ENCODE measurements at regions of chr20 and their contacts with region 1.

Region 1: DNA sequence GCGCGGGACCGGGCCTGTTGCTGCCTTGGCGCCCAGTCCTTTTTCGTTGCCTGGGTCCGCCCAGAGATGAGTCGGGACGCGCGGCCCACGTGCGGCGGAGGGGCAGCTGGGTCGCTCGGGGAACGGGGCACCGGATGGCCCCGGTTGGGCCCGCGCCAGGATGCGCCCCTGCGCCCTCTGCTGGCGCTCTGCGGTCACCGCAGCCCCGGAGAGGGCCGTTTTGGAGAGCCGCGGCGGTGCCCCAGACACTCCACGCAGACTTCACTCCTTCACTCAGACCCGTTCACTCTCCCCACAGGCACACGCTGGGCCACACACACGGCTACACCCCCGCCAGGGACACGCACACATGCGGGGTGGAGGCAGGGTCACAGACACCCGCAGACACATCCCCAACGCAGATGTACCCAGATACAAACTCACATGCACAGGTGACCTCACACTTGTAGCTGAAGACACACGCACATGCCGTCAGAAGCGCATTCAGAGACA is 38.8 kb downstream of the SRC start:
- DNase-seq: peak; percentile 89
- CTCF ChIP-seq: peak; percentile 94

Region 2: DNA sequence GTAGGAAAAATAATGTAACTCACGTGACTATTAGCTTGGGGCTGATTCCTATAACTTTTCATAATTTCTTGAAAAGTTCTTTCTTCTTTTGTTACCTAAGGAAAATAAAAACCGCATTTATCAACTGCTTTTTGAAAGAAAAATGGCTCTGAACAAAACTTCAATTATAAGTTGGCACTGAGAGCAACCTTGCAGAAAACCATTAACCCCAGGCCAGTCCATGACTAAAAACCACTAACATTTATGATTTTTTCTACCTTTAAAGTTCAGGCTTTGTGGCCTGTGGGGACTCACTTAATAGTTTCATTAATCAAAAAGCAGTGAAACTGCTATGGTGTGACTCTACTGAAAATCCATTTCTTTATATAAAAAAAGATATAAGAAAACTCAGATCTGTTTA is 364.1 kb before region 1 on chr20:
- CTCF ChIA-PET with region 1: no interaction called
- POLR2A ChIA-PET with region 1: no interaction called
- DNase-seq: no peak
- CTCF ChIP-seq: no peak

Region 3: GRCh38 chr20:37131486-37131885 is 253.2 kb before region 1 on chr20:
- CTCF ChIA-PET with region 1: no interaction called
- POLR2A ChIA-PET with region 1: no interaction called
- DNase-seq: no peak
- CTCF ChIP-seq: no peak

Region 4: DNA sequence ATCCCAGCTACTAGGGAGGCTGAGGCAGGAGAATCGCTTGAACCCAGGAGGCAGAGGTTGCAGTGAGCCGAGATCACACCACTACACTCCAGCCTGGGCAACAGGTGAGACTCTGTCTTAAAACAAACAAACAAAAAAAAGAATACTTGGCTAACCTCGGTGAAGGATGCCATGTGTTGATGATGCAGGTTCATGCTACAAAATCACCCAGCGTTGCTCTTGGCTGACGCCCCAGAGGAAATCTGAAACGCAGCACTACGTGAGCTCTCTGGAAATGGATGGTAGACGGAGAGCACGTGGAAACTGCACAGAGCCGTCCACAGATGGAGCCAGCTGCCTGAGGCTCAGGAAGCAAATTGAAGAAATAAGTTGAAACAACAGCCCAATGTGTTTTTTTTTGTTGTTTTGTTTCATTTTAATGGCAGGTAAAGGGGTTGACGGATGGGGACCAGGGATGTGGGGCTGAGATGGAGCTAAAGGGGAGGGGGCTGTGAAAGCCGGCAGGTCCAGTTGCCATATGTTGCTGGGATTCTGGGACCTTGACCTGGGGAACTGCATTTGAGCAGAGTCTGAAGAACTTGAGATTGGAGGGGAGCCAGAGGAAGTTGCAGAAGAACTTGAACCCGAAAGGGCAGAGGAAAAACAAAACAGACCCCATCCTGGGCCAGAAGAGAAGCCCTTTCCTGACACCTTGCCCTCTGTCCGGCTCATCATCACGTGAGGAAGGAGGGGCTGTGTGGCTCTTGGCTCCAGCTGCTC is 108.1 kb before region 1 on chr20:
- CTCF ChIA-PET with region 1: interaction called, 116 read pairs
- POLR2A ChIA-PET with region 1: no interaction called
- DNase-seq: peak; percentile 77
- CTCF ChIP-seq: peak; percentile 55

Region 5: DNA sequence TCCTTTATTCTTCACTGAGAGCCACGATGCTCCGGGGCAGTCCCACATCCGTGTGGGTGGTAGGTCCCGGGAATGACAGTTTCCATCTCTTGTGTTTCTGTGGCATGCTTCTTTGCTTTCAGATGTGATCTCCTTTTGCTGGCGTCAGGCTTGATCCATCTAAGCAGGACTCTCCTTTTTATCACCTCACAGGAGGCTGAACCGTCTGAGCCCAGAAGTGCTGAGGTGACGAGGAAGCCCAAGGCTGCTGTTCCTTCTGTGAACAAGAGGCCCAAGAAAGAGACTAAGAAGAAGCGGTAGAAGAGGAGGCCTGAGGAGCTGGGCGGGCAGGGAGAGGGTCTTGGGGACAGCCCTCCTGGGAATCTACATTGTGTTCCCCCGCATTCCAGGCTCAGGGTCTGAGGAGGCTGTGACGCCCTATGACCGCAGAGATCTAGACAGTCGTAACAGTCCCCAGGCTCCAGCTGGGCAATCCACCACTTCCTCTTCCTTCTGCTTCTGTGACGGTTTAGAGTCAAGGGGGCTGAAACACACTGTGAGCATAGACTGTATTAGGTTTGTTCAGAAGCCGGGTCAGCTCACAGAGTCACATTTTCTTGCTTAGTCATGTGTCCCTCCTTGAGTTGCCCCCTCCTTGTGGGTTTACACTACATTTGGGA is 68.5 kb before region 1 on chr20:
- CTCF ChIA-PET with region 1: no interaction called
- POLR2A ChIA-PET with region 1: no interaction called
- DNase-seq: peak; percentile 75
- CTCF ChIP-seq: no peak

Region 6: DNA sequence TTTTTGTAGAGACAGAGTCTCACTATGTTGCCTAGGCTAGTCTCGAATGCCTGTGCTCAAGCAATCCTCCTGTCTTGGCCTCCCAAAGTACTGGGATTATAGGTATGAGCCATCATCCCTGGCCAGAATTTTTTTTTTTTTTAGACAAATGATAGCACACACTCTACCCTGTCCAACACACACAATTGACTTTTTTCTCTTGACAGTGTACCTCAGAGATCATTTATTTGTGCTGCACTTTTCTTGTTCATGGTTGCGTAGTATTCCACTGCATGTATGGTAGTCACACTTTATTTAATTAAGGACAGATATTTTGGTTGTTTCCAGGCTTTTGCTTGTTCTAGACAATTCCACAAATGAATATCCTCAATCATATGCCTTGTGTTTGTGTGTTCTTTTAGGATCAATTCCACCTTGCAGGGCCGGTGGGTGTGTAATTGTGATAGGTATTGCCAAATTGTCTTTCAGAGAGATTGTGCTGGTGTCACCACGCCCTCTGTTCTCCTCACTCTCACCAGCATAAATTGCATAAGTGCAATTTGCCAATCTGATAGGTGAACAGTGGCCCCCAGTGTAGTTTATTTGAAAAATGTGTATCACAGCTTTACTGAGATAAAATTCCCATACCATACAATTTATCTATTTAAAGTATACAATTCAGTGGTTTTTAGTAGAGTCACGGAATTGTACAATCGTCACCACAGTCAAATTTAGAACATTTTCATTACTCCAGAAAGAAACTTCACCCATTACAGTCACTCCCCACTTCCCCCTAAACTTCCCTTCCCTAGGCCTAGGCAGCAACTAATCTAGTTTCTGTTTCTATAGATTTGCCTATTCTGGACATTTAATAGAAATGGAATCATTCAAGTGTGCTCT is 18.7 kb before region 1 on chr20:
- CTCF ChIA-PET with region 1: interaction called, 43 read pairs
- POLR2A ChIA-PET with region 1: no interaction called
- DNase-seq: no peak
- CTCF ChIP-seq: no peak

Region 7: DNA sequence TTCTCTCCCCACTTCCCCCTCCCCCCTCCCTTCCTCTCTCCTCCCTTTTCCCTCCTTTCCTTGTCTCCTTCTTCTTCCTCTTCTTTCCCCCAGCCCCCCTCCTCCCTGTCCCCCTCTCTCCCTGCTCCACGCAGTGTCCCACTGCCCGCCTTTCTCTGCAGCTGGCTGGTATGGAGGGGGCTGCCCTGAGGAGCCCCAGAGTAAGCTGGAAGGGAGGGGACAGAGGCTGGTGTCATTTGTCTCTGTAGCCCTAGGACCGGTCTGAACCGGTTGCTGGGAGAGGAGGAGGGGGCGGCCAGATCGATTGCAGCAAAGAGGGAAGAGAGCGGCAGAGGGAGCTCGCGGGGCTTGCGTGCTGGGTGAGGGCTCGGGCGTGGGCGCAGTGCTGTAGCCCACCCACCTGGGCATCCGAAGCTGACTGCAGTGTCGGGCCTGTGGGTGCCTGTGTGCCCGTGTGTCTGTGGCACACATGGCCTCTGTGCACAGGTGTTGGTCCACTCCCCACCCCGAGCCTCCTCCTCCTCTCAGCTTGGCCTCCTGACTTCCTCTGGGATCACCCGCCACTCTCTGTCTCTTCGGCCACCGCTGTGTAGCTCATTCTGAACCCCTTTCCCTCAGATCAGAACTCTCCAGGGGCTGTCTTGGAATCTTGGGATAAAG is 11.8 kb after region 1 on chr20:
- CTCF ChIA-PET with region 1: interaction called, 13 read pairs
- POLR2A ChIA-PET with region 1: no interaction called
- DNase-seq: no peak
- CTCF ChIP-seq: no peak